Activated CD4-positive, alpha-beta T cell treated with anti-CD3 and anti-CD28 coated beads for 36 hours (primary cell): ENCODE measurements at regions of chr3 and their contacts with region 1.

Region 1: GRCh38 chr3:126982471-126983175 is at the start of gene PLXNA1:
- DNase-seq: peak; percentile 90
- ATAC-seq: peak; percentile 84
- H3K4me3 Mint-ChIP-seq: peak within 1 kb of the TSS; percentile 74
- H3K27ac Mint-ChIP-seq: peak within 1 kb of the TSS; percentile 88
- H3K4me1 Mint-ChIP-seq: peaks cover 20% of the 10 kb centered on the region
- H3K27me3 Mint-ChIP-seq: peaks cover 8% of the 10 kb centered on the region
- total RNA-seq, gene PLXNA1: 6.7 to 8.8 TPM

Region 2: DNA sequence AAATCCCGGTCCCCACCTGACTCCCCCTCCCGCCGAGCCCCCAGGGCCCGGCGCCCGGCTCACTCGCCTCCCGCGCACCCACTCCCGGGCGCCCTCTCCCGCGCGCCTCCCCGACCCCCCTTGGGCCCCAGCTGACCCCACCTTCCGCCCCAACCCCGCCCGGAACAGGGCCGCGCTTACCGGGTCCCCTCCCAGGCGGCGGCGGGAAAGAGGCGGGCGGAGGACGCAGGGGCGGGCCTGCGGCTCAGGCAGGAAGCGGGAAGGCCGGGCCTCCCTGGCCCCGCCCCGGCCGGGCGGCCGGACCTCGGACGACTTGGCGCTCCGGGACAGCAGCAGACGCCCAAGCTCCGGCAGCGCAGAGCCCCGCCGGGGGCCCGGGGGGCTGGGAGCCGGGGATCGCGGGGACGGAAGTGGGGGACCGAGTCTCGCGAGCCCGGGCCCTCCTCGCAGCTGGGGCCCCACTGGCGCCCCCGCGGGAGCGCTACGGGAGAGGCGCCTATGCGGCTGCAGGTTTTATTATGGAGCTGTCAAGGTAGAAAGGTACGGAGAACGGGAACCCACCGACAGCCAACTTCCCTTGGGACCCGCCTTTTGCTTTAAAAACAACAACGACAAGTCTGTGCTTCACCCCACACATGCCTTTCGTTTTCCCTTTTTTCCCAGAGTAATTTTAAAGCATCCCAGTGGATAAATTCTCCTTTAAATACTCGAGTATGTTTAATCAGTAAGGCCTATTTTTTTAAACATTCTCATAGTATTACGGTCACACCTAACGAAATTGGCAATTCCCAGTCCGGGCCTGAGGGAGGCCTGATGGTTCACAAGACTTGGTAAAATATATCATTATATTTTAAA is 898.5 kb before region 1 on chr3 and contains the start of gene SLC41A3:
- CTCF ChIA-PET with region 1: no interaction called
- POLR2A ChIA-PET with region 1: no interaction called
- intact Hi-C with region 1: loop called in 1 of 2 experiments (anchors 2 kb)
- DNase-seq: peak; percentile 93
- ATAC-seq: peak; percentile 92
- H3K4me3 Mint-ChIP-seq: peak within 1 kb of the TSS; percentile 92
- H3K27ac Mint-ChIP-seq: peak within 1 kb of the TSS; percentile 96
- H3K4me1 Mint-ChIP-seq: peaks cover 24% of the 10 kb centered on the region
- H3K27me3 Mint-ChIP-seq: no peaks in the 10 kb centered on the region
- total RNA-seq, gene SLC41A3: 23.1 to 26.6 TPM

Region 3: DNA sequence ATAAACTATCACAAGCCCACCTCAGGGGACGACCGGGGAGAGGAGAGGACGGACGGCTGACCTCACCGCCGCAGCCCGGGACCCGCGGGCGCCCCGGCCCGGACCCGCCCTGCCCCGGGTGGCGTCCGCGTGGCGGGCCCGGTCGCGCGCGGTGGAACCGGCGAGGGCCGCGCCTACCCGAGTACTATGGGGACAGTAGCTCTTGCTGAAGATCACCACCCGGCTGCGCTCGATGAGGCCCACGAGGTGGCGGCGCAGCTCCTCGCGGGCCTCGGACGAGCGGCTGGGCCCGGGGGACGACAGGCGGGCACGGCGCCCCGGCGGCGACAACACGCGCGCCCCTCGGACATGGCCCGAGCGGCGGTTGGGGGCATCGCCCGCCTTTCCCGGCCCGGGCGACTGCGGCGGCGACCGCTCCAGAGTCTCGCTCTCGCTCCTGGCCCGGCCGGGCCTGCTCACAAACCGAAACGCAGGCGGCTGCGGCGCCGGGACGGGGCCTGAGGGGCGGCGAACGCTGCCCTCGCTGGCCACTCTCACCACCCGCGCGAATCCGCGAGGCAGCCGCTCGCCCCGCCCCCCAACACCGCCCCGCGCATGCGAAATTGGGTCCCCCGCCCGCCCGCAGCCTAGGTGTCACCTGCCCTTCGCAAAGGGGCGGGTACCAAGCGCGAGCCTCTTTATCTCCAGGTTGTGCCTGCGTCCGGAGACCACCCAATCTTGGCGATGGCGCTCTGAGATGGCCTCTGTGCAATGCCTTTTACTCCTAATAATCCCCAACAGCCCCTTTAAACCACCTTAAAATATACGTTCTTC is 327.8 kb before region 1 on chr3 and contains the start of gene TXNRD3:
- CTCF ChIA-PET with region 1: no interaction called
- POLR2A ChIA-PET with region 1: interaction called, 3 read pairs
- intact Hi-C with region 1: loop called in 1 of 2 experiments (anchors 1 kb)
- DNase-seq: peak; percentile 87
- ATAC-seq: peak; percentile 95
- H3K4me3 Mint-ChIP-seq: peak within 1 kb of the TSS; percentile 74
- H3K27ac Mint-ChIP-seq: peak within 1 kb of the TSS; percentile 60
- H3K4me1 Mint-ChIP-seq: peaks cover 6% of the 10 kb centered on the region
- H3K27me3 Mint-ChIP-seq: peaks cover 5% of the 10 kb centered on the region
- total RNA-seq, gene TXNRD3: 2.5 to 3.5 TPM

Region 4: GRCh38 chr3:126752303-126752842 is 230.2 kb before region 1 on chr3:
- CTCF ChIA-PET with region 1: no interaction called
- POLR2A ChIA-PET with region 1: no interaction called
- intact Hi-C with region 1: loop called in 1 of 2 experiments (anchors 1 kb)
- DNase-seq: peak; percentile 78
- ATAC-seq: peak; percentile 90
- H3K4me3 Mint-ChIP-seq: no peak overlapping the region
- H3K27ac Mint-ChIP-seq: no peak overlapping the region
- H3K4me1 Mint-ChIP-seq: no peaks in the 10 kb centered on the region
- H3K27me3 Mint-ChIP-seq: no peaks in the 10 kb centered on the region

Region 5: GRCh38 chr3:127092776-127093175 is 110.2 kb after region 1 on chr3:
- CTCF ChIA-PET with region 1: no interaction called
- POLR2A ChIA-PET with region 1: no interaction called
- intact Hi-C with region 1: no loop called
- DNase-seq: no peak
- ATAC-seq: no peak
- H3K4me3 Mint-ChIP-seq: no peak overlapping the region
- H3K27ac Mint-ChIP-seq: no peak overlapping the region
- H3K4me1 Mint-ChIP-seq: no peaks in the 10 kb centered on the region
- H3K27me3 Mint-ChIP-seq: no peaks in the 10 kb centered on the region

Region 6: DNA sequence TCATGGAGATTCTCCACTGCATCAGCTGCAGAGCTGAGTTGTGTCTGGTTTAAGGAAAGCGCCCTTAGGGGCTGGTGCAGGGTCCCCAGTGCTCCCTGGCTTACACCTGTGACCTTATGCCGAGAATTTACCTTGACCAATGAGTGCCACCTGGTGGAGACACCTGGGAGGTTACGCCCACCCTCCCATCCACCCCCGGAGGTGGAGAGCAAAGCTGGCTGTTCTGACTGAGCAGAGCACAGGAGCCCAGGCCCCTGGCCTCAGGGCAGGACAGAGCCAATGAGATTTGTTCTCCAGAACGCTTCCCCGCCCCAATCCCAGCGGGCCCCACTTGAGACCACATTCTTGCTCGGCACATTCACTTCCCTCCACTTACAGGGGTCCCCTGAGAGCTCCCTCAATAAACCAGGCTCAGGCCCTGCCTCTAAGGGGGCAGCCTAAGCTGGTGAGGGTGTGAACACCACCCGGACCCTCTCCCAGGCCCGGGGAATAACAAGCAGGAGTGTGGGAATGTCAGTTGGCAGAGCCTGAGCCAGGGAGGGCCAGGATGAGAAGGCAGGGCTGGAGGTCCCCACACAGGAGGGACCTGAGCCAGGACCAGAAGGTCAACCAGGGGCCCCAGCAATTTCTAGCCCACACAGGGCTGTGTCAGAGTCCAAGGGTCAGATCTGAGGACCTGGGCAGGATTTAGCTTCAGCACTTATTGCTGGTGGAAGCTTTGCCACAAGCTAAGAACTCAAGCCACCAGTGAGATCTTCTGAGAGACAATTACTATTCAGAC is 490.8 kb after region 1 on chr3:
- CTCF ChIA-PET with region 1: no interaction called
- POLR2A ChIA-PET with region 1: no interaction called
- intact Hi-C with region 1: loop called in 1 of 2 experiments (anchors 5 kb)
- DNase-seq: peak; percentile 63
- ATAC-seq: peak; percentile 58
- H3K4me3 Mint-ChIP-seq: no peak overlapping the region
- H3K27ac Mint-ChIP-seq: no peak overlapping the region
- H3K4me1 Mint-ChIP-seq: no peaks in the 10 kb centered on the region
- H3K27me3 Mint-ChIP-seq: peaks cover 14% of the 10 kb centered on the region

Region 7: DNA sequence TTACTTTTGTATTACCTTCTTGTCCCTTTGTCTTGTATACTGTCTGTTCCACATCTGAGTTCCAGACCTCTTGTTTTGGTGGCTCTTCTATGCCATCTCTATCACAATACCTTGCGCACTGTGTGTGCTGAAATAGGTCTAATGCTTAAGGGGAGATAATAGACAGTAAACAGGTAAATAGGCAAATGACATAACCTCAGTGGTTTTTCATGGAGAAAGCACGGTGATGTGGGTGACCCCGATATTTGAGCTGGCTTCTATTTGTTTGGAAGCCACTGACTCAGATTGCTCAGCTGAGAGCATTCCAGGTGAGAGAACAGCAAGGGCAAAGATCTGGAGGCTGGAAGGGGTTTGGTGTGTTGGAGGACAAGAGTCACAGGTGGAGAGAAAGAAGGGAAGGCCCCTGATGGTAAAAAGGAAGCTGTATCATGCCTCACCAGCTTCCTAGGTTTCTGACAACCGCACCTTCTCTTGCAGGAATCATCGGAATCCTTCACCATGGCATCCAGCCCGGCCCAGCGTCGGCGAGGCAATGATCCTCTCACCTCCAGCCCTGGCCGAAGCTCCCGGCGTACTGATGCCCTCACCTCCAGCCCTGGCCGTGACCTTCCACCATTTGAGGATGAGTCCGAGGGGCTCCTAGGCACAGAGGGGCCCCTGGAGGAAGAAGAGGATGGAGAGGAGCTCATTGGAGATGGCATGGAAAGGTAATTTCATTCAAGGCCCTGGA is 616.4 kb after region 1 on chr3:
- CTCF ChIA-PET with region 1: no interaction called
- POLR2A ChIA-PET with region 1: no interaction called
- intact Hi-C with region 1: loop called in 1 of 2 experiments (anchors 1 kb)
- DNase-seq: no peak
- ATAC-seq: no peak
- H3K4me3 Mint-ChIP-seq: peak overlapping the region; percentile 80
- H3K27ac Mint-ChIP-seq: peak overlapping the region; percentile 96
- H3K4me1 Mint-ChIP-seq: peaks cover 41% of the 10 kb centered on the region
- H3K27me3 Mint-ChIP-seq: no peaks in the 10 kb centered on the region

Region 8: GRCh38 chr3:127610105-127610504 is 627.5 kb after region 1 on chr3:
- CTCF ChIA-PET with region 1: no interaction called
- POLR2A ChIA-PET with region 1: no interaction called
- intact Hi-C with region 1: no loop called
- DNase-seq: no peak
- ATAC-seq: no peak
- H3K4me3 Mint-ChIP-seq: no peak overlapping the region
- H3K27ac Mint-ChIP-seq: no peak overlapping the region
- H3K4me1 Mint-ChIP-seq: no peaks in the 10 kb centered on the region
- H3K27me3 Mint-ChIP-seq: no peaks in the 10 kb centered on the region